CD4-positive, alpha-beta memory T cell (primary cell): ENCODE measurements at regions of chr6 and their contacts with region 1.

Region 1: DNA sequence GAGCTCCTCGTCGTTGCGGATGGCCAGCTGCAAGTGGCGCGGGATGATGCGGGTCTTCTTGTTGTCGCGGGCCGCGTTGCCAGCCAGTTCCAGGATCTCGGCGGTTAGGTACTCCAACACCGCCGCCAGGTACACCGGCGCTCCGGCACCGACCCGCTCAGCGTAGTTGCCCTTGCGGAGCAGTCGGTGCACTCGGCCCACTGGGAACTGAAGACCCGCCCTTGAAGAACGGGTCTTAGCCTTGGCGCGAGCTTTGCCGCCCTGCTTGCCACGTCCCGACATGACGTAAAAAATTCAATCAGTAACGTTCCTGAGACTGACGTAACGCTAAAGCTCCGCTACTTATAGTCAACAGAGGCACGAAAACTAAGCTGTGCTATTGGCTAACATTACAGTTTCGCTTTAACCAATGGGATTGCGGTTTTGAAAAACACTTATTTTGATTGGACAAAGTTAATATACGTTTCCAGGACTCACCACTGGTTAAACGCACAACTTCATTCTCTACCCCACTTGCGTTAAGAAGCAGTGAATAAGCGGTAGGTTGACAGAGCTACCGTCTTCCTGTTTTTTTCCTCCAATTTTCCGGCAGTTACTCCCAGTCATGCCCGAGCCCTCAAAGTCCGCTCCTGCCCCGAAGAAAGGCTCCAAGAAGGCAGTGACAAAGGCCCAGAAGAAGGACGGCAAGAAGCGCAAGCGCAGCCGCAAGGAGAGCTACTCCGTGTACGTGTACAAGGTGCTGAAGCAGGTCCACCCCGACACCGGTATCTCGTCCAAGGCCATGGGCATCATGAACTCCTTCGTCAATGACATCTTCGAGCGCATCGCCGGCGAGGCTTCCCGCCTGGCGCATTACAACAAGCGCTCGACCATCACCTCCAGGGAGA is 73.9 kb downstream of the OR2B2 start:
- DNase-seq: peak; percentile 91 to 94 (median 92)
- H3K4me3 ChIP-seq: peak overlapping the region; percentile 63 to 67
- H3K4me3 Mint-ChIP-seq: no peak overlapping the region
- H3K27ac ChIP-seq: peak overlapping the region; percentile 93
- H3K27ac Mint-ChIP-seq: no peak overlapping the region
- H3K4me1 ChIP-seq: peaks cover 30% of the 10 kb centered on the region
- H3K4me1 Mint-ChIP-seq: peaks cover 6 to 20% (median 12%) of the 10 kb centered on the region in 4 donors
- H3K27me3 ChIP-seq: no peaks in the 10 kb centered on the region
- H3K27me3 Mint-ChIP-seq: peaks cover 2 to 3% of the 10 kb centered on the region in 2 donors

Region 2: GRCh38 chr6:26031595-26032339 is 1806.5 kb before region 1 on chr6:
- CTCF ChIA-PET with region 1: interaction called, 4 read pairs
- POLR2A ChIA-PET with region 1: interaction called, 26 read pairs
- intact Hi-C with region 1: loop called (anchors 10 kb)
- DNase-seq: peak; percentile 86 to 94 (median 89)
- H3K4me3 ChIP-seq: peak overlapping the region; percentile 53 to 67
- H3K4me3 Mint-ChIP-seq: peak overlapping the region; percentile 91 to 99 (median 94)
- H3K27ac ChIP-seq: peak overlapping the region; percentile 71
- H3K27ac Mint-ChIP-seq: peak overlapping the region; percentile 89 to 98 (median 96)
- H3K4me1 ChIP-seq: peaks cover 35% of the 10 kb centered on the region
- H3K4me1 Mint-ChIP-seq: peaks cover 33 to 54% (median 44%) of the 10 kb centered on the region in 4 donors
- H3K27me3 ChIP-seq: no peaks in the 10 kb centered on the region
- H3K27me3 Mint-ChIP-seq: peaks cover 0 to 3% of the 10 kb centered on the region in 2 donors

Region 3: DNA sequence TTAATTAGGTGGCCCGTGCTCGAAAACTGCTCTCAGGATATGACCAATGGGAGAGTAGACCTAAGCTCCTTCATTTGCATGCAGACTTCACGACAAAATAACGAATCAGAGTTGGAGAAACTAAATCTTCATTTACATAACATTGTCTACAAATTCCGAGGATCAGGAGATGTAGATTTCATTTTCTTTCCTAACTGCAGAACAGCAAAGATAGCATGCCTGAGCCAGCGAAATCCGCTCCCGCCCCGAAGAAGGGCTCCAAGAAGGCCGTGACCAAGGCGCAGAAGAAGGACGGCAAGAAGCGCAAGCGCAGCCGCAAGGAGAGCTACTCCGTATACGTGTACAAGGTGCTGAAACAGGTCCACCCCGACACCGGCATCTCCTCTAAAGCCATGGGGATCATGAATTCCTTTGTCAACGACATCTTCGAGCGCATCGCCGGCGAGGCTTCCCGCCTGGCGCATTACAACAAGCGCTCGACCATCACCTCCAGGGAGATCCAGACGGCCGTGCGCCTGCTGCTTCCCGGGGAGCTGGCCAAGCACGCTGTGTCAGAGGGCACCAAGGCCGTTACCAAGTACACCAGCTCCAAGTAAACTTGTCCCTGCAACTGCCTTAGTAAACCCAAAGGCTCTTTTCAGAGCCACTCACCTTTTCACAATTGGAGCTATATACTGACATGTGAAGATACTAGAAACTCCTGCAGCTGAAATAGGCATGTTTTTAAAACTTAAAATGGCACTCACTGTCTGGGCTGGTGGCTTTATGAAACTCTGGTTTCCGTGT is 1654.5 kb before region 1 on chr6:
- CTCF ChIA-PET with region 1: no interaction called
- POLR2A ChIA-PET with region 1: interaction called, 16 read pairs
- intact Hi-C with region 1: no loop called
- DNase-seq: peak; percentile 72 to 81 (median 79)
- H3K4me3 ChIP-seq: peak overlapping the region; percentile 2 to 69
- H3K4me3 Mint-ChIP-seq: peak overlapping the region; percentile 90 to 100 (median 96)
- H3K27ac ChIP-seq: peak overlapping the region; percentile 67
- H3K27ac Mint-ChIP-seq: peak overlapping the region; percentile 78 to 99 (median 95)
- H3K4me1 ChIP-seq: peaks cover 45% of the 10 kb centered on the region
- H3K4me1 Mint-ChIP-seq: peaks cover 29 to 54% (median 37%) of the 10 kb centered on the region in 4 donors
- H3K27me3 ChIP-seq: no peaks in the 10 kb centered on the region
- H3K27me3 Mint-ChIP-seq: no peaks in the 10 kb centered on the region

Region 4: GRCh38 chr6:26249957-26250697 is 1588.2 kb before region 1 on chr6:
- CTCF ChIA-PET with region 1: no interaction called
- POLR2A ChIA-PET with region 1: interaction called, 15 read pairs
- intact Hi-C with region 1: no loop called
- DNase-seq: peak; percentile 79 to 88 (median 83)
- H3K4me3 ChIP-seq: peak overlapping the region; percentile 86 to 88
- H3K4me3 Mint-ChIP-seq: peak overlapping the region; percentile 92 to 99 (median 98)
- H3K27ac ChIP-seq: peak overlapping the region; percentile 59
- H3K27ac Mint-ChIP-seq: peak overlapping the region; percentile 85 to 97 (median 94)
- H3K4me1 ChIP-seq: peaks cover 25% of the 10 kb centered on the region
- H3K4me1 Mint-ChIP-seq: peaks cover 28 to 53% (median 40%) of the 10 kb centered on the region in 4 donors
- H3K27me3 ChIP-seq: no peaks in the 10 kb centered on the region
- H3K27me3 Mint-ChIP-seq: no peaks in the 10 kb centered on the region

Region 5: DNA sequence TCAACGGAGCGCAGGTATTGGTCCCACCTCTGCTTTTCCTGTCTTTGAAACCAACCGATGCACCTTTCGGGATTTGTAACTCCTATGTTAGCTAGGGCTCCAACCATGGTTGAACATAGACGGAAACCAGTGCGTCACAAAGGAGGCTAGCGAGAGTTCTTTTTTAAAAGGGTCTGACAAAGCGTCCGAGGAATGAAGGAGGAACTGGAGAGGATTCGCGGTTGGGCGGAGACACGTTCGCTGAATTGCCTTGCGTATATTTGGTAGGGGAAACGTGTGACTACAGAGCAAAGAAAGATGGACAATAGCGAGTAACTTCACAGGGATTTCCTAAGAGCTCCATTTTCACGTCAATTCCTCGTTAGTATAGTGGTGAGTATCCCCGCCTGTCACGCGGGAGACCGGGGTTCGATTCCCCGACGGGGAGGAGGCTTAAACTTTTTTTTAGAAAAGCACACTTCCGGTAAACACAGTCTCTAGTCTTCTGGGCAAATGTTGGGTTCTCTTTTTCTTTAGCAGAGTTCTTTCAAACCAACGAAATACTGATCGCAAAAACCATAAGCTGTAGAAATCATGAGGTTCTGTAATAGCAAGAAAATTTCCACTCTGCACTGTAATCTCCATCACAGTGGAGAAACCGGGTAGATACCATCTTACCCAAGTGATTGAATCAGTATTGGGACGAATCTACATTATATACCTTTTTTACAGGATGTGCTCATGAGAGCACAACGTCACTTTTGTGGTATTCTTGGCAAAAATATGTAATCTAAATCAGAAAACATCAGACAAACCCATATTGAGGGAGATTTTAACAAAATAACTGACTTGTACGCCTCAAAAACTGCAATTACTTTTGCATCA is 358.8 kb before region 1 on chr6:
- CTCF ChIA-PET with region 1: no interaction called
- POLR2A ChIA-PET with region 1: interaction called, 21 read pairs
- intact Hi-C with region 1: no loop called
- DNase-seq: peak; percentile 87 to 93 (median 92)
- H3K4me3 ChIP-seq: peak overlapping the region; percentile 88 to 93
- H3K4me3 Mint-ChIP-seq: no peak overlapping the region
- H3K27ac ChIP-seq: peak overlapping the region; percentile 85
- H3K27ac Mint-ChIP-seq: no peak overlapping the region
- H3K4me1 ChIP-seq: peaks cover 17% of the 10 kb centered on the region
- H3K4me1 Mint-ChIP-seq: peaks cover 0 to 11% (median 5%) of the 10 kb centered on the region in 4 donors
- H3K27me3 ChIP-seq: no peaks in the 10 kb centered on the region
- H3K27me3 Mint-ChIP-seq: no peaks in the 10 kb centered on the region

Region 6: GRCh38 chr6:27630727-27631608 is 207.3 kb before region 1 on chr6:
- CTCF ChIA-PET with region 1: no interaction called
- POLR2A ChIA-PET with region 1: no interaction called
- intact Hi-C with region 1: no loop called
- DNase-seq: no peak
- H3K4me3 ChIP-seq: no peak overlapping the region
- H3K4me3 Mint-ChIP-seq: peak overlapping the region in 7 of 8 donors; percentile 48 to 75 (median 70)
- H3K27ac ChIP-seq: no peak overlapping the region
- H3K27ac Mint-ChIP-seq: no peak overlapping the region
- H3K4me1 ChIP-seq: no peaks in the 10 kb centered on the region
- H3K4me1 Mint-ChIP-seq: peaks cover 4 to 10% (median 7%) of the 10 kb centered on the region in 4 donors
- H3K27me3 ChIP-seq: peaks cover 3% of the 10 kb centered on the region
- H3K27me3 Mint-ChIP-seq: peaks cover 53 to 66% of the 10 kb centered on the region in 2 donors

Region 7: GRCh38 chr6:27825025-27825793 is 13.1 kb before region 1 on chr6:
- CTCF ChIA-PET with region 1: interaction called, 41 read pairs
- POLR2A ChIA-PET with region 1: interaction called, 409 read pairs
- intact Hi-C with region 1: loop called (anchors 1 kb)
- DNase-seq: no peak
- H3K4me3 ChIP-seq: peak overlapping the region; percentile 62 to 79
- H3K4me3 Mint-ChIP-seq: peak overlapping the region; percentile 88 to 98 (median 92)
- H3K27ac ChIP-seq: peak overlapping the region; percentile 66
- H3K27ac Mint-ChIP-seq: peak overlapping the region; percentile 91 to 100 (median 98)
- H3K4me1 ChIP-seq: peaks cover 29% of the 10 kb centered on the region
- H3K4me1 Mint-ChIP-seq: peaks cover 16 to 43% (median 31%) of the 10 kb centered on the region in 4 donors
- H3K27me3 ChIP-seq: no peaks in the 10 kb centered on the region
- H3K27me3 Mint-ChIP-seq: no peaks in the 10 kb centered on the region

Region 8: GRCh38 chr6:28895134-28895812 is 1057.0 kb after region 1 on chr6:
- CTCF ChIA-PET with region 1: no interaction called
- POLR2A ChIA-PET with region 1: interaction called, 11 read pairs
- intact Hi-C with region 1: no loop called
- DNase-seq: peak; percentile 90 to 94 (median 93)
- H3K4me3 ChIP-seq: peak overlapping the region; percentile 90 to 97
- H3K4me3 Mint-ChIP-seq: peak overlapping the region; percentile 94 to 99 (median 98)
- H3K27ac ChIP-seq: peak overlapping the region; percentile 96
- H3K27ac Mint-ChIP-seq: peak overlapping the region; percentile 97 to 100 (median 100)
- H3K4me1 ChIP-seq: peaks cover 17% of the 10 kb centered on the region
- H3K4me1 Mint-ChIP-seq: peaks cover 4 to 24% (median 18%) of the 10 kb centered on the region in 4 donors
- H3K27me3 ChIP-seq: no peaks in the 10 kb centered on the region
- H3K27me3 Mint-ChIP-seq: peaks cover 2 to 6% of the 10 kb centered on the region in 2 donors